ENCODE measurements at regions of chr11 and their contacts with region 1.

Region 1: GRCh38 chr11:88307749-88308425 is 29.6 kb downstream of the CTSC start:
- DNase-seq: peak; percentile 33
- ATAC-seq: peak; percentile 75
- H3K4me3 Mint-ChIP-seq: peak overlapping the region; percentile 65
- H3K27ac Mint-ChIP-seq: peak overlapping the region; percentile 100
- H3K4me1 Mint-ChIP-seq: peaks cover 76% of the 10 kb centered on the region
- H3K27me3 Mint-ChIP-seq: no peaks in the 10 kb centered on the region
- CTCF ChIP-seq: no peak

Region 2: GRCh38 chr11:88288560-88288959 is 19.3 kb before region 1 on chr11:
- CTCF ChIA-PET with region 1: no interaction called
- POLR2A ChIA-PET with region 1: no interaction called
- DNase-seq: no peak
- ATAC-seq: no peak
- H3K4me3 Mint-ChIP-seq: no peak overlapping the region
- H3K27ac Mint-ChIP-seq: no peak overlapping the region
- H3K4me1 Mint-ChIP-seq: peaks cover 22% of the 10 kb centered on the region
- H3K27me3 Mint-ChIP-seq: no peaks in the 10 kb centered on the region
- CTCF ChIP-seq: no peak

Region 3: GRCh38 chr11:88327061-88327460 is 19.2 kb after region 1 on chr11:
- CTCF ChIA-PET with region 1: interaction called, 4 read pairs
- POLR2A ChIA-PET with region 1: interaction called, 10 read pairs
- DNase-seq: no peak
- ATAC-seq: no peak
- H3K4me3 Mint-ChIP-seq: peak overlapping the region; percentile 14; the same call in 1 of the 2 replicates
- H3K27ac Mint-ChIP-seq: no peak overlapping the region
- H3K4me1 Mint-ChIP-seq: peaks cover 96% of the 10 kb centered on the region
- H3K27me3 Mint-ChIP-seq: no peaks in the 10 kb centered on the region
- CTCF ChIP-seq: no peak